ENCODE measurements at regions of chr1 and their contacts with region 1.

Region 1: GRCh38 chr1:150765296-150765976 is at the start of gene CTSS:
- DNase-seq: peak; percentile 17
- H3K4me3 ChIP-seq: peak within 1 kb of the TSS; percentile 26
- H3K27ac ChIP-seq: peak within 1 kb of the TSS; percentile 15
- H3K4me1 ChIP-seq: peaks cover 4% of the 10 kb centered on the region
- H3K27me3 ChIP-seq: no peaks in the 10 kb centered on the region
- CTCF ChIP-seq: no peak
- total RNA-seq, gene CTSS: 3.5 and 5.4 TPM in 2 replicates

Region 2: DNA sequence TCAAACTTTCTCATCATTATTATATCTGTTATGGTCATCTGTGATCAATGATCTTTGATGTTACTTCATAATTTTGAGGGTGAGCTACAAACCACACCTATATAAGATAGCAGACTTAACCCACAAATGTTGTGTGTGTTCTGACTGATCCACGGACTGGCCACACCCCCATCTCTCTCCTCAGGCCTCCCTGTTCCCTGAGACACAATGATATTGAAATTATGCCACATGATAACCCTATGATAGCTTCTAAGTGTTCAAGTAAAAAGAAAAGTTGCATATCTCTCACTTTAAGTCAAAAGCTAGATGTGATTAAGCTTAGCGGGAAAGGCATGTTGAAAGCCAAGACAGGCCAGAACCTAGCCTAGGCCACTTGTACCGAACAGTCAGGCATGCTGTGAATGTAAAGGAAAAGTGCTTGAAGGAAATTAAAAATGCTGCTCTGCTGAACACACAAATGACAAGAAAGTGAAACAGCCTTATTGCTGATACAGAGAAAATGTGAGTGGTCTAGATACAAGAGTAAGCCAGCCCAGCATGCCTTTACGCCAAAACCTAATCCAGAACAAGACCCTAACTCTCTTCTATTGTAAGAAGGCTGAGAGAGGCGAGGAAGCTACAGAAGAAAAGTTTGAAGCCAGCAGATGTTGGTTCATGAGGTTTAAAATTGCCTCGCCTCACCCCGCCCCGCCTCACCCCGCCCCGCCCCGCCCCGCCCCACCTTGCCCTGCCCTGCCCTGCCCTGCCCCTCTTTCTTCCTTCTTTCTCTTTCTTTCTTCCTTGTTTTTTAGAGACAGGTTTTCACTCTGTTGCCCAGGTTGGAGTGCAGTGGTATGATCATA is 16.3 kb before region 1 on chr1:
- CTCF ChIA-PET with region 1: no interaction called
- POLR2A ChIA-PET with region 1: interaction called, 17 read pairs
- intact Hi-C with region 1: no loop called
- DNase-seq: no peak
- H3K4me3 ChIP-seq: no peak overlapping the region
- H3K27ac ChIP-seq: no peak overlapping the region
- H3K4me1 ChIP-seq: peaks cover 5% of the 10 kb centered on the region
- H3K27me3 ChIP-seq: no peaks in the 10 kb centered on the region
- CTCF ChIP-seq: no peak